ENCODE measurements at regions of chr6 and their contacts with region 1.

Region 1: DNA sequence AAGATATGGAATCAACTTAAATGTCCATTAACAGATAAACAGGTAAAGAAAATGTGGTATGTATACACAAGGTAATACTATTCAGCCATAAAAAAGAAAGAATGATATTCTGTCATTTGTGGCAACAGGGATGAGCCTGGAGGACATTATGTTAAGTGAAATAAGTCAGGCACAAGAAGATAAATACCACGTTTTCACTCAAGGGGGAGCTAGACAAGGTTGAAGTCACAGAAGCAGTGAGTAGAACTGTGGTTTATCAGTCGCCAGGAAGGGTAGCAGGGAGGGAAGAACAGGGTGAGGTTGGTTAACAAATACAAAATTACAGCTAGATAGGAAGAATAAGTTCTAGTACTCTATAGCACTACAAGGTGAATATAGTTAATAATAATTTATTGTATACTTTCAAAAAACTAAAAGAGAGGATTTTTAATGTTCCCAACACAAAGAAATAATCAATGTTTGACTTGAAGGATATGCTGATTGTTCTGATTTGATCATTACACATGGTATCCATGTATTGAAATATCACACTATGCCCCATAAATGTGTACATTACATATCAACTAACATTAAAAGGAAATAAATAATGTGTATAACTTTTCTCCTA is 21.1 kb downstream of the RTN4IP1 start:
- DNase-seq: peak in 1 of 4 donors; percentile 23
- ATAC-seq: peak; percentile 86
- H3K4me3 ChIP-seq: no peak overlapping the region
- H3K27ac ChIP-seq: no peak overlapping the region
- H3K4me1 ChIP-seq: no peaks in the 10 kb centered on the region
- H3K27me3 ChIP-seq: no peaks in the 10 kb centered on the region
- CTCF ChIP-seq: peak in 1 of 2 donors; percentile 36

Region 2: GRCh38 chr6:106979427-106979884 is 371.3 kb after region 1 on chr6:
- intact Hi-C with region 1: loop called in 1 of 2 experiments (anchors 5 kb)
- DNase-seq: peak; percentile 62 to 96 (median 86)
- ATAC-seq: peak; percentile 84
- H3K4me3 ChIP-seq: no peak overlapping the region
- H3K27ac ChIP-seq: no peak overlapping the region
- H3K4me1 ChIP-seq: peaks cover 0 to 11% of the 10 kb centered on the region in 2 donors
- H3K27me3 ChIP-seq: peaks cover 11 to 78% of the 10 kb centered on the region in 2 donors
- CTCF ChIP-seq: peak; percentile 88 to 89

Measured in left lung (tissue), 14 donors.